K562 (cell line): ENCODE measurements at regions of chr7 and their contacts with region 1.

Region 1: DNA sequence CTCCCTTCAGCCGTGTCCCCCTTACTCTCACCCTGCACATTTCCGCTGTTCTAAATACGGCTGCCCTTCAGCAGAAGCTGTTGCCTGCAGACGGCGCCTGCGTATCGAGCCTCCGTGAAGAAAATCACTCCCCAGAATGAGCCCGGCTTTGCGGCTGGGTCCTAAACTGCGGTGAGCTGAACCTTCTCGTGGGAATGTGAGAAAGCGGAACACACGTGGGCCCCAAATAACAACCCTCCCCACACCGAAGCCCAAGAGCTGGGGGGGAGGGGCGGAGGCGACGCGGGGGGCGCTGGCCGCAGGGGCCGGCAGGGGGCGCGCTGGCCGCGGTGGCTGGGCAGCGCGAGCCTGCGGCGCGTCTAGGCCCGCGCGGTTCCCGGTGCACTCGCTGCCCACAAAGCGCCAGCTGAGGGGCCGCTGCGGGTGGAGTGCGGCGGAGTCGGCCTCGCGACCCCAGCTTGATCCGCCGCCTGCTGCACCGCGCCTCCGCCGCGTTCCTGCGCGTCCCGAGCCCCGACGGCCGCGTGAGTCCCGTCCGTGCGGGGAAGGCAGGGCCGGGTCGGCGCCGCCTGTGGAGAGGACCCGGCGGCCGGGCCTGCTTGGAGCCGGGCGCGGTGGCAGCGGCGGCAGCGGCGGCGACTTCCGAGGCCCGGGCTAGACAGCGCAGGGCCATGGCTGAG is at the start of gene ZNF398:
- DNase-seq: peak; percentile 93 to 97 (median 97)
- ATAC-seq: peak; percentile 81
- H3K4me3 ChIP-seq: peak within 1 kb of the TSS; percentile 88
- H3K27ac ChIP-seq: peak within 1 kb of the TSS; percentile 82
- H3K4me1 ChIP-seq: peaks cover 16 to 40% of the 10 kb centered on the region in 2 experiments; a peak in 3 of 5 replicates
- H3K27me3 ChIP-seq: no peaks in the 10 kb centered on the region
- CTCF ChIP-seq: peak; percentile 52 to 89 (median 71)
- EP300 ChIP-seq: no peak
- POLR2A ChIP-seq: peak; percentile 85
- RAD21 ChIP-seq: peak in 1 of 2 experiments; percentile 28; a peak in 3 of 4 replicates
- polyA plus RNA-seq, gene ZNF398: 4.0 to 4.4 TPM

Region 2: GRCh38 chr7:148645898-148646297 is 501.3 kb before region 1 on chr7:
- CTCF ChIA-PET with region 1: no interaction called
- POLR2A ChIA-PET with region 1: no interaction called
- in situ Hi-C with region 1: no loop called
- intact Hi-C with region 1: no loop called
- DNase-seq: no peak
- ATAC-seq: no peak
- H3K4me3 ChIP-seq: no peak overlapping the region
- H3K27ac ChIP-seq: no peak overlapping the region
- H3K4me1 ChIP-seq: no peaks in the 10 kb centered on the region
- H3K27me3 ChIP-seq: peaks cover 49 to 58% of the 10 kb centered on the region in 2 experiments
- CTCF ChIP-seq: no peak
- EP300 ChIP-seq: no peak
- POLR2A ChIP-seq: no peak
- RAD21 ChIP-seq: no peak

Region 3: DNA sequence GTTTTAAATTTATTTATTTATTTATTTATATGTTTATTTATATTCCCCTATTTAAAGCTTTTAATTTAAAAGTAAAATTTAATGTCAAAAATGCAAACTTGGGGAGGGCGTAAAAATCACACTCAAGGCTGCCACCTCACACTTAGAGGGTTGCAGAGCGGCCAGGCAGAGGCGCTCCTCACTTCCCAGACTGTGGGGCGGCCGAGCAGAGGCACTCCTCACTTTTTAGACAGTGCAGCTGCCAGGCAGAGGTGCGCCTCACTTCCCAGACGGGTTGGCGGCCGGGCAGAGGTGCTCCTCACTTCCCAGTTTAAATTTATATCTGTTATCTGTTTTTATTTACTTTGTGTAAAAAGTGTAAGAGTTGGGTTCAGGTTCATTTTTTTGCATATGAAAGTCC is 11.1 kb before region 1 on chr7:
- CTCF ChIA-PET with region 1: no interaction called
- POLR2A ChIA-PET with region 1: interaction called, 10 read pairs
- in situ Hi-C with region 1: no loop called
- intact Hi-C with region 1: no loop called
- DNase-seq: no peak
- ATAC-seq: no peak
- H3K4me3 ChIP-seq: no peak overlapping the region
- H3K27ac ChIP-seq: no peak overlapping the region
- H3K4me1 ChIP-seq: no peaks in the 10 kb centered on the region; a peak in 1 of 5 replicates
- H3K27me3 ChIP-seq: no peaks in the 10 kb centered on the region
- CTCF ChIP-seq: no peak
- EP300 ChIP-seq: no peak
- POLR2A ChIP-seq: no peak
- RAD21 ChIP-seq: no peak

Region 4: DNA sequence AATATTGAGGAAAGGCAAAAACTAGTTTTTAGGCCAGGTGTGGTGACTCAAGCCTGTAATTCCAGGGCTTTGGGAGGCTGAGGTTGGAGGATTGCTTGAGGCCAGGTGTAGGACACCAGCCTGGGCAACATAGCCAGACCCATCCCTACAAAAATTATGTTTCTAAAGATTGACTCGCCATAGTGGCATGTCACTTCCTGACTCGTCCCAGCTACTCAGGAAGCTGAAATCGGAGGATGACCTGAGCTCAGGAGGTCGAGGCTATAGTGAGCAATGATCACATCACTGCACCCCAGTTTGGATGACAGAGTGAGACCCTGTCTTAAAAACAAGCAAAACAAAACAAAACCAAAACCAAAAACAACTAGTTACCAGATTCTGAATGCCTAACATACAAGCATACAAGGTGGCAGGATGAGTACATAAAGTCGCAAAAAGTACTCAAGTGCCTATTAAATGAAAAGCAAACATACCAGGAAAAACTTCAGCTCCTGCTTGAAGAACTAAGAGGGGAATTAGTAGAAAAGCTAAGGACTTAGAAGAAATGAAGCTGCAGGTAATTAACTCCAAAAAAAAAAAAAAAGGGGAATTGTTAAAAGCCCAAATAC is 14.1 kb after region 1 on chr7:
- CTCF ChIA-PET with region 1: no interaction called
- POLR2A ChIA-PET with region 1: interaction called, 10 read pairs
- in situ Hi-C with region 1: no loop called
- intact Hi-C with region 1: no loop called
- DNase-seq: no peak
- ATAC-seq: no peak
- H3K4me3 ChIP-seq: no peak overlapping the region
- H3K27ac ChIP-seq: no peak overlapping the region
- H3K4me1 ChIP-seq: no peaks in the 10 kb centered on the region
- H3K27me3 ChIP-seq: no peaks in the 10 kb centered on the region
- CTCF ChIP-seq: no peak
- EP300 ChIP-seq: no peak
- POLR2A ChIP-seq: no peak
- RAD21 ChIP-seq: no peak